Endothelial cell of umbilical vein (primary cell): ENCODE measurements at regions of chr11 and their contacts with region 1.

Region 1: GRCh38 chr11:57456960-57457642 is 3.2 kb upstream of the RTN4RL2 start:
- DNase-seq: peak; percentile 79
- H3K4me3 ChIP-seq: no peak overlapping the region
- H3K27ac ChIP-seq: no peak overlapping the region
- H3K4me1 ChIP-seq: peaks cover 14% of the 10 kb centered on the region
- H3K27me3 ChIP-seq: peaks cover 29 to 39% of the 10 kb centered on the region in 2 experiments
- CTCF ChIP-seq: peak; percentile 92 to 99
- POLR2A ChIP-seq: no peak

Region 2: GRCh38 chr11:57353036-57353435 is 104.1 kb before region 1 on chr11:
- CTCF ChIA-PET with region 1: interaction called, 13 read pairs
- POLR2A ChIA-PET with region 1: interaction called, 3 read pairs
- dilution Hi-C with region 1: no loop called
- intact Hi-C with region 1: loop called (anchors 1 kb)
- DNase-seq: no peak
- H3K4me3 ChIP-seq: no peak overlapping the region
- H3K27ac ChIP-seq: no peak overlapping the region
- H3K4me1 ChIP-seq: no peaks in the 10 kb centered on the region
- H3K27me3 ChIP-seq: peaks cover 0 to 3% of the 10 kb centered on the region in 2 experiments
- CTCF ChIP-seq: no peak
- POLR2A ChIP-seq: no peak

Region 3: GRCh38 chr11:57406337-57406904 is 50.7 kb before region 1 on chr11:
- CTCF ChIA-PET with region 1: interaction called, 8 read pairs
- POLR2A ChIA-PET with region 1: no interaction called
- dilution Hi-C with region 1: no loop called
- intact Hi-C with region 1: loop called (anchors 5 kb)
- DNase-seq: peak; percentile 90
- H3K4me3 ChIP-seq: no peak overlapping the region
- H3K27ac ChIP-seq: peak overlapping the region; percentile 84
- H3K4me1 ChIP-seq: peaks cover 26% of the 10 kb centered on the region
- H3K27me3 ChIP-seq: no peaks in the 10 kb centered on the region
- CTCF ChIP-seq: no peak
- POLR2A ChIP-seq: peak; percentile 28

Region 4: DNA sequence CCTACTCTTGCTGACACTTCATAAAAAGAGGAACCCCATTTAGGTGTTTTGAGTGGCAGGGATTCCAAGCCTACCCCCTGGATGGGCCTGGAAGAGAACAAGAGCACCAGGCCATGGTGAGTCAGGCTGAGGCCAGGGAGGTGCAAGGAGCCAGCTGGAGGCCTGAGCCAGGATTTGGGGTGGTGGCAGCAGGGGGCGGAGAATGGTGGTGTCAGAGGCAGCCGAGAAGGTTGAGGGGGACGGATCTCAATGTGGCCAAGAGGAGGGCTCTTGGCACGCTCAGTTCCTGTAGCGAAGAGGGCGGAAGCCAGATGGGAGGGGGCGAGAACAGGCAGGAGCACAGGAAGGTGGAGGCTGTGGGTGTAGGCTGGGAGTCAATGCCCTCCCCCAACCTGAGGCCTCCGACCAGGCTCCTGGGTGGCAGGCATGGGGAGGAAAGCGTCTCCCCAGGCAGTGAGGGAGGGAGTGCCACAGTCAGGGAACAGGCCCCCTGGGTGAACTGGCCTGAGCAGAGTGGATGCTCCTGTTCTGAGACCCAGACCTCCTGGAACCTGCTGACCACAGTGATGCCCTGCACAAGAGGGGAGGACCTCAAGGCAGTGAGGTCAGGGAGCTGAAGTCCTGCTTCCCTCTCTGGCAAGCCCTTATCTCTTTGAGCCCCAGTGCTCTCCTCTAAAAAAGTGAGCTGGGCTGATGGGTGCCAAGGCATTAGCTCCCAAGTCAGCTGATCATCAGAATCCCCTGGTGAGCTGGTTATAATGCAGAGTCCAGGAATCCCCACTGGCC is 17.1 kb after region 1 on chr11:
- CTCF ChIA-PET with region 1: interaction called, 152 read pairs
- POLR2A ChIA-PET with region 1: no interaction called
- dilution Hi-C with region 1: no loop called
- intact Hi-C with region 1: no loop called
- DNase-seq: no peak
- H3K4me3 ChIP-seq: no peak overlapping the region
- H3K27ac ChIP-seq: no peak overlapping the region
- H3K4me1 ChIP-seq: peaks cover 7% of the 10 kb centered on the region
- H3K27me3 ChIP-seq: peaks cover 5 to 27% of the 10 kb centered on the region in 2 experiments
- CTCF ChIP-seq: no peak
- POLR2A ChIP-seq: no peak

Region 5: GRCh38 chr11:57515332-57516060 is 58.4 kb after region 1 on chr11 and contains the start of gene SLC43A1:
- CTCF ChIA-PET with region 1: interaction called, 49 read pairs
- POLR2A ChIA-PET with region 1: no interaction called
- dilution Hi-C with region 1: no loop called
- intact Hi-C with region 1: no loop called
- DNase-seq: peak; percentile 69
- H3K4me3 ChIP-seq: peak within 1 kb of the TSS; percentile 64 to 79 (median 68)
- H3K27ac ChIP-seq: no peak within 1 kb of the TSS
- H3K4me1 ChIP-seq: peaks cover 9% of the 10 kb centered on the region
- H3K27me3 ChIP-seq: no peaks in the 10 kb centered on the region
- CTCF ChIP-seq: no peak
- POLR2A ChIP-seq: peak; percentile 25
- total RNA-seq, gene SLC43A1: 11.3 and 13.7 TPM in 2 replicates

Region 6: DNA sequence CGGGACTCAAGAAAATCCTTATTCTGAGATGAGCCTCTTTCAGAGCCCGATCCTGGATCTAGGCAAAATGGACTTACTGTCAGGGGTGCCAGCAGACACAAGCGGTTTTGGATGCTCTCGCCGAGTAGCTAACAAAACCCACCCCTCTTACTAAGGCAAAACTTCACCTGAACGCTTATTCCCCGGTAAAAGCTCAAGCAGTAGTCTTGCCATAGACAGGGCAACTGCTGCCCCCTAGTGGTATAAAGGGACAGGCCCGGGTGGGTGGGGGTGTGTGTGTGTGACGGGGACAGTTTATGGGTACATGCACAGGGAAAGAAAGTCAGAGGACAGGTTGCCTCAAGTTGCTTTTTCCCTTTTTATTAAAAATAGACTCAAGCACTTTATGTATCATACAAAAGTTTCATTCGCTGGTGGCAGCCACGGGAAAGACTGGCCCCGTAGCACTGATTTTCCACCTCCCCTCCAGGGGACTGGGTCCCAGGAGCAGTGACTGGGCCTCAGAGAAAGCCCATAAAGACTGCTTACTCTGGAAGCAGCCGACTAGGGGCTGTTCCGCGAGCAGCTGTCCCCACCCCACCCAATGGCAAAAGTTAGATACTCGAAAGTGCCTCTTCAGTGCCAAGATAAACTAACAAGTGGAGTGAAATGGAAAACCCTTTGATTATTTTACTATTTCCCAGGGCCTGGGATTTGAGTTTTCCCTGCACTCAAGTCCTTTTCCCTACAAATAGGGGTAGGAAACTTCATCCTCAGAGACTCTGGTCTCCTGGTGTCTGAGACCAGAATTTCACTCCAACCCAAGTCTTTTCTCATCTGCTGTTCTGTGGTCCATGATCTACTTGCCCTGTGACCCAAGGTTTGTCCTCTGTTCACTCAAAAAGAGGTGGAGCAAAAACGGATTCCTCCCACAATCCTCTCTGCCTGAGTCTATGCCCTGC is 187.9 kb after region 1 on chr11:
- CTCF ChIA-PET with region 1: interaction called, 37 read pairs
- POLR2A ChIA-PET with region 1: interaction called, 3 read pairs
- dilution Hi-C with region 1: no loop called
- intact Hi-C with region 1: loop called (anchors 1 kb)
- DNase-seq: peak; percentile 68
- H3K4me3 ChIP-seq: no peak overlapping the region
- H3K27ac ChIP-seq: no peak overlapping the region
- H3K4me1 ChIP-seq: peaks cover 14% of the 10 kb centered on the region
- H3K27me3 ChIP-seq: peaks cover 38 to 44% of the 10 kb centered on the region in 2 experiments
- CTCF ChIP-seq: peak; percentile 78 to 86
- POLR2A ChIP-seq: no peak

Region 7: DNA sequence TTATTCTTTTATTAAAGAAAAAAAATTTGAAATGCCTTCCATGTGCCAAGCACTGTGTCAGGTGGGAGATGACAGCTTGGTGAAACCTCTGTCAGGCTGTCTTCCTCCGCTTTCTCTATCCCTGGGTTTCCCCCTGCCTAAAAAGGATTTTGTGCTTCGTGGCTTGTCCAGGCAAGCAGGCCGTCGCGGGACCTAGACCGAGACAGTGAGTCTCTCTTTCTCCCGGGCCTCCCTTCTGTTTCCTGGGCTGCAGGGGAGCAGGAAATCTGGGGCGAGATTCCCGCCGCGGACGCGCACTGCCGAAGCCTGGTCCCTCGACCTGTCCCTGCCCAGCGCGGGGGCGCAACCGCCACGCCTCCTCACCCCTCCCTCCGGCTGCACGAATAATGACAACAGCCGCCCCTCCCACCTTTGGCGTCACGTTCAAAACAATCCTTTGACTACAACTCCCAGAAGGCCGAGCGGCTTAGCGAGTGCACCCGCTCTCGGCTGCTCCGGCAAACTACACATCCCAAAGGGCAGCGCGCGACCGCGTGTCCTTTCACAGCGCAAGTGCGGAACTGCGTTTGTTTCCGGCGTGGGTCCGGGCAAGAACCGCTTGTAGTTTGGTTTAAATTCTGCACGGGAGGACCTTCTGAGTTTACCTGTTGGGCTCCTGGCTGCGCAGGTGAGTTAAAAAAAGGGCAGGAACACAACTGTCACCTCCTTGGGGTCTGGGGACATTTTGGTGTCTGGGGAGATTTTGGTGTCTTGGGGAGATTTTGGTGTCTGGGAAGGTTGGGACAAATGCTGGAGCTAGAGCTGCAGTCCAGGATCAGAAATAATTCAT is 200.3 kb after region 1 on chr11 and contains the start of gene CLP1:
- CTCF ChIA-PET with region 1: no interaction called
- POLR2A ChIA-PET with region 1: no interaction called
- dilution Hi-C with region 1: no loop called
- intact Hi-C with region 1: no loop called
- DNase-seq: peak; percentile 99
- H3K4me3 ChIP-seq: peak within 1 kb of the TSS; percentile 59 to 98 (median 90)
- H3K27ac ChIP-seq: peak within 1 kb of the TSS; percentile 75
- H3K4me1 ChIP-seq: peaks cover 4% of the 10 kb centered on the region
- H3K27me3 ChIP-seq: no peaks in the 10 kb centered on the region
- CTCF ChIP-seq: no peak
- POLR2A ChIP-seq: peak; percentile 70
- total RNA-seq, gene CLP1: 17.9 and 20.9 TPM in 2 replicates